Thyroid gland (tissue), 4 donors: ENCODE measurements at regions of chr1 and their contacts with region 1.

Region 1: GRCh38 chr1:26500488-26501175 is 28.4 kb downstream of the HMGN2 start:
- DNase-seq: peak; percentile 90 to 92
- H3K4me3 ChIP-seq: peak overlapping the region; percentile 8 to 61 (median 61)
- H3K27ac ChIP-seq: peak overlapping the region; percentile 75 to 95 (median 89)
- H3K4me1 ChIP-seq: peaks cover 10 to 16% of the 10 kb centered on the region in 2 donors
- H3K27me3 ChIP-seq: no peaks in the 10 kb centered on the region
- CTCF ChIP-seq: peak in 1 of 6 experiments; percentile 16
- POLR2A ChIP-seq: peak in 1 of 2 donors; percentile 69

Region 2: GRCh38 chr1:26094677-26095383 is 405.8 kb before region 1 on chr1:
- intact Hi-C with region 1: no loop called
- DNase-seq: peak; percentile 26 to 55
- H3K4me3 ChIP-seq: no peak overlapping the region
- H3K27ac ChIP-seq: peak overlapping the region in 2 of 3 donors; percentile 33 to 35
- H3K4me1 ChIP-seq: peaks cover 0 to 14% of the 10 kb centered on the region in 2 donors
- H3K27me3 ChIP-seq: no peaks in the 10 kb centered on the region
- CTCF ChIP-seq: no peak
- POLR2A ChIP-seq: no peak

Region 3: DNA sequence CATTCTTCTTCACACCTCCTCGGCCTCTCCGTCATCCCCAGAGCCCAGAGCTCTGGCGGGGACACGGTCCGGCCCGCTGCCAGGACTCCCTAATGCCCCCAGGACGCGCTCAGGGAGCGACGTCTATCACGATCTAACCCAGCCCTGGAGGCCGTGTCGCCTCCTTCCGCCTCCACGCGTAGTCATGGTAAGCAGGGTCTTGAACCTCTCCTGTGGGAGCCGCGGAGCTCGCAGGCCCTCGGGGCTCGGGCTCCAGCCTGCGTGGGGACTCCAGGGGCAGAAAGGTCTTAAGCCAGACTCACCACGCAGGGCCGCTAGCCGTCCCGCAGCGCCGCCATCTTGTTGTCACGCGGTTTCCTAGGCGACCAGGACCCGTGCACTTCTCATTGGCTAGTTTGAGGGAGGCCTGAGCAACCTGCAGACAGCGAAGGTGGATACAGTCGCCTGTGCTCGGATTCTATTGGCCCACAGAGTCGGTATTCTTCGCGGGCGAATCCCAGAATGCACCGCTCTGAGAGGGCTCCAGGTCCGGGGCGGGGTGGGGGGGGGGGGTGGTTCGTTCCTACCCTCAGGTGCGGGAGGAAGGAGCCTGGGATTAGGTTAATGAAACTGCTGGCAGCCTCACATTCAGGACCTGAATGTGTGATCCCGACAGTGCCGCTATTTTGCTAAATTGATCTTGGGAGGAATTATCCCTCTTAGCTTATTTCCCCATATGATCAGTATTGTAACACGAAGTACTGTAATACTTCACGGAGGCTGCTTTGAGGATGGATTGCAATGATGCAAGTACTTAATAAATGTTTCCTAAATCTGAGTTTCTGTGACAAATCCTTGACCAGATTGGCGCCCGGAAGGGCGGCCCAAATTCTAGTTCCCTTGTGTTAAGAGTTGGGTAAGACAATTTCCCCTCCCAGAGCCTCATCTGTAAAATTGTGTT is 194.1 kb before region 1 on chr1 and contains the start of gene UBXN11:
- intact Hi-C with region 1: no loop called
- DNase-seq: peak; percentile 97 to 98
- H3K4me3 ChIP-seq: peak within 1 kb of the TSS; percentile 34 to 81 (median 56)
- H3K27ac ChIP-seq: no peak within 1 kb of the TSS
- H3K4me1 ChIP-seq: peaks cover 10 to 11% of the 10 kb centered on the region in 2 donors
- H3K27me3 ChIP-seq: no peaks in the 10 kb centered on the region
- CTCF ChIP-seq: no peak
- POLR2A ChIP-seq: peak in 1 of 2 donors; percentile 47
- total RNA-seq, gene UBXN11: 23.9 to 35.4 (median 30.2) TPM

Region 4: DNA sequence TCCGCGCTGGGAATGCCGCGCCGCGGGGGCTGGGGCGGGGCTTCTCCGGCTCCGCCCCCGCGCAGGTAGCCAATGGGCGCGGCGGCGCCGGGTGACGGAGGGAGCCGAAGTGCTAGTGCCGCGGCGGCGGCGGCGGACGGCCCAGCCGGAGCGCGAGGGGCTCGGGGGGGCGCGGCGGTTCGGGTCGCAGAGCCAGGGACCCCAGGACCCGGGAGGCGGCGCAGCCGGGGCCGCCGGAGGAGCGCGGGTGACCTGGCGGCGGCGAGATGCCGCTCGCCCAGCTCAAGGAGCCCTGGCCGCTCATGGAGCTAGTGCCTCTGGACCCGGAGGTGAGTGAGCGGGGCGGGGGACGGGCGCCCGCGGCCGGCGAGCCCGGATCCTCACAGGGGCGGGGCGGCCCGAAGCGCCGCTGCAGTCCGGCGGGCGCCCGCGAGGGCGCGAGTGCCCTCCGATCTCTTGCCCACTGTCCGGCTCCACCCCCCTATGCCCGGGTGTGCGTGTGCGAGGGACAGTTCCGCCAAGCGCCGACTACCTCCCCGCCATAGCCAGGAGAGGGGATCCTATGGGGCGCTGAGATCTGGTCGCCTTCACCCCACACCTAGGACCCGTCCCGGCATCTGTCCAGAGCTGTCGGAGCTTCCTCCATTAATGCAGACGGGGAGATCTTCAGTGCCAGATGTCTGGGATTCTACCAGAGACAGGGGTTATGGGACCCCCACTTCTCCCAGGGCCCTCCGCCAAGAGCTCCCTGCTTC is 29.2 kb after region 1 on chr1 and contains the start of gene RPS6KA1:
- intact Hi-C with region 1: loop called (anchors 2 kb)
- DNase-seq: peak; percentile 74 to 78
- H3K4me3 ChIP-seq: peak within 1 kb of the TSS; percentile 41 to 75 (median 47)
- H3K27ac ChIP-seq: peak within 1 kb of the TSS; percentile 53 to 94 (median 70)
- H3K4me1 ChIP-seq: peaks cover 27 to 45% of the 10 kb centered on the region in 2 donors
- H3K27me3 ChIP-seq: no peaks in the 10 kb centered on the region
- CTCF ChIP-seq: peak in 2 of 6 experiments; percentile 15 to 28
- POLR2A ChIP-seq: peak; percentile 80 to 97
- total RNA-seq, gene RPS6KA1: 55.8 to 98.6 (median 76.3) TPM

Region 5: GRCh38 chr1:26602378-26602959 is 101.8 kb after region 1 on chr1:
- intact Hi-C with region 1: no loop called
- DNase-seq: peak; percentile 20 to 24
- H3K4me3 ChIP-seq: no peak overlapping the region
- H3K27ac ChIP-seq: no peak overlapping the region
- H3K4me1 ChIP-seq: peaks cover 0 to 6% of the 10 kb centered on the region in 2 donors
- H3K27me3 ChIP-seq: no peaks in the 10 kb centered on the region
- CTCF ChIP-seq: peak; percentile 45 to 98 (median 88)
- POLR2A ChIP-seq: no peak

Region 6: DNA sequence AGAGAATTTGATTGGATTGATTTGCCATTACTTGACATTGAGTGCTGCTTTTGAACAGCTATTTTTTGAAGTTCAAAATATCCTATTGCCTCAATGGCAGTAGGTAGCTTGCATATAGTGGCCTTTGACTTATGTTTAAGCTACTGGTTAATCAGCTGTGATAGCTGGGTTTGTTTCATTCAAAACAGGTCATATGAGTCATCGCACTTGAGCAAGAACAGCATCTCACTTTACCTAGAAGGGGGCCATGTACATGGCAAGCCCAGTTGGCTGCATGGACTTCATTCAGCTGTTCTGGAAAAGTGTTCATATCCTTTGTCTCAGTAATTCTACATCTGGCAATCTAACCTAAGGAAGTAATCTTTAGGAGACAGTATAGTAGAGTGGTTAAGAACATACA is 166.2 kb after region 1 on chr1:
- intact Hi-C with region 1: no loop called
- DNase-seq: no peak
- H3K4me3 ChIP-seq: no peak overlapping the region
- H3K27ac ChIP-seq: no peak overlapping the region
- H3K4me1 ChIP-seq: no peaks in the 10 kb centered on the region
- H3K27me3 ChIP-seq: no peaks in the 10 kb centered on the region
- CTCF ChIP-seq: no peak
- POLR2A ChIP-seq: no peak